Sigmoid colon (tissue), 7 donors: ENCODE measurements at regions of chr9 and their contacts with region 1.

Region 1: DNA sequence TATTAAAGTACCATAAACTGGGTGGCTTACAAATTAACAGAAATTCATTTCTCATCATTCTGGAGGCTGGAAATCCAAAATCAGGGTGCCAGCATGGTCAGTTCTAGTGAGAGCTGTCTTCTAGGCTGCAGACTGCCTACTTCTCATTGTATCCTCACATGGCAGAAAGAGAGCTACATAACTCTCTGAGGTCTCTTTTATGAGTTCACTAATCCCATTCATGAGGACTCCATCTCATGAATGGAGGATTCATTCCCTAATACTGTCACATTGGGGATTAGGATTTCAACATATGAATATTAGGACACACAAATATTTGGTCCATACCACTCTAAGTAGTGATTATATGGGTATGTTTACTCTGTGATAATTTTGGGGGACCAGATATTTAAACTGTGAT is 84.0 kb downstream of the ERP44 start:
- DNase-seq: no peak
- H3K4me3 ChIP-seq: no peak overlapping the region
- H3K27ac ChIP-seq: no peak overlapping the region
- H3K4me1 ChIP-seq: no peaks in the 10 kb centered on the region
- H3K27me3 ChIP-seq: no peaks in the 10 kb centered on the region
- CTCF ChIP-seq: no peak
- EP300 ChIP-seq: no peak
- POLR2A ChIP-seq: no peak

Region 2: GRCh38 chr9:99748266-99748665 is 266.6 kb before region 1 on chr9:
- intact Hi-C with region 1: no loop called
- DNase-seq: no peak
- H3K4me3 ChIP-seq: no peak overlapping the region
- H3K27ac ChIP-seq: no peak overlapping the region
- H3K4me1 ChIP-seq: no peaks in the 10 kb centered on the region
- H3K27me3 ChIP-seq: no peaks in the 10 kb centered on the region
- CTCF ChIP-seq: no peak
- EP300 ChIP-seq: no peak
- POLR2A ChIP-seq: no peak

Region 3: DNA sequence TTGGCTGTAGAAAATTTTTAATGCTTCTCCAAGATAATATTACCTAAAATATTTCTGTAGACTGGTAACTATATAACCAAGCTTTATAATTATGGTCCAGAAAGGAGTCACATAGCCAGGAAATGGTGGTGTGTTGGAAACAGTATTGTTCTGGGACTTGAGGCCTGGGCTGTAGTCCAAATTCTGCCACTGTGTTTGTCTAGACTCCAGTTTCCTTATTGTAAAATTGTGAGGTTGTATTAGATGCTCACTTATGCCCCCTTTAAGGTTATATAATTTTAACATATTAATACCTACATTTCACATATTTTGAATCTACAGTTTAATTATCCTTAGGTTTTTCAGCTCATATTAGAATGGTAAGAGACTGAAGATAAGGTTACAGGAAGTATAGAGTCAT is 66.0 kb before region 1 on chr9:
- intact Hi-C with region 1: loop called (anchors 5 kb)
- DNase-seq: no peak
- H3K4me3 ChIP-seq: no peak overlapping the region
- H3K27ac ChIP-seq: no peak overlapping the region
- H3K4me1 ChIP-seq: no peaks in the 10 kb centered on the region
- H3K27me3 ChIP-seq: no peaks in the 10 kb centered on the region
- CTCF ChIP-seq: no peak
- EP300 ChIP-seq: no peak
- POLR2A ChIP-seq: no peak

Region 4: DNA sequence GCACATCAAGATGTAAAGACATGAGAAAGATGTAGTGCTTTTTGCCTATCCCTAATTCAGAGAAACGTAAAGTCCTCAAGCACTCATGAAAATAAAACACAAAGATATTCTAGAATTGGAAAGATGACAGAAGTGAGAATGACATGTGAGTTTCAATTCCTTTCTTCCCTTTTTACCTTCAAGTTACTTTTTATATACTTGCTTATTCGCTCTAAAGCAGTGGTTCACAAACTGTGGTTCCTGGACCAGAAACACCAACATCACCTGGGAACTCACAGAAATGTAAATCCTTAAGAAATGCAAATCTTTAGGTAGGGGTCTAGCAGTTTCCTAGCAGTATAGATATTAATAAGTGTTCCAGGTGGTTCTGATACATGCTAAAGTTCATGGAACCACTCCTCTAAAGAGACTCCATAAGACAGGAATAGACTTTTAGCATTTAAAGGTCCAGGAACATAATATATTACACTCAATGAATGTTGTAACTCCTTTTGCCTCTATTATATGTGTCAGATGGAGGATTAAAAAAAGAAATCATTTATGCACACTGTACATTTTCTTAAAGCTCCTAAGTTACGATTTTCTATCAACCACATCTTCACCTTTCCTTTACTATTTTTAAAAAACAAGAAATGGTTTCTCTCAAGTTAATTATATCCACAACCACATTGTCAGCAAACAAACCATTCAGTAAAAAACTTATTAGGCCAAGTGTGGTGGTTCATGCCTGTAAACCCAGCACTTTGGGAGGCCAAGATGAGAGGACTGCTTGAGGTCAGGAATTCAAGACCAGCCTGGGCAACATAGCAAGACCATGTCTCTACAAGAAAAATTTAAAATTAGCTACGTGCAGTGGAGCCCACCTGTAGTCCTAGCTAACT is 44.1 kb after region 1 on chr9:
- intact Hi-C with region 1: no loop called
- DNase-seq: no peak
- H3K4me3 ChIP-seq: no peak overlapping the region
- H3K27ac ChIP-seq: no peak overlapping the region
- H3K4me1 ChIP-seq: peaks cover 0 to 10% (median 2%) of the 10 kb centered on the region in 4 donors
- H3K27me3 ChIP-seq: no peaks in the 10 kb centered on the region
- CTCF ChIP-seq: no peak
- EP300 ChIP-seq: no peak
- POLR2A ChIP-seq: no peak

Region 5: DNA sequence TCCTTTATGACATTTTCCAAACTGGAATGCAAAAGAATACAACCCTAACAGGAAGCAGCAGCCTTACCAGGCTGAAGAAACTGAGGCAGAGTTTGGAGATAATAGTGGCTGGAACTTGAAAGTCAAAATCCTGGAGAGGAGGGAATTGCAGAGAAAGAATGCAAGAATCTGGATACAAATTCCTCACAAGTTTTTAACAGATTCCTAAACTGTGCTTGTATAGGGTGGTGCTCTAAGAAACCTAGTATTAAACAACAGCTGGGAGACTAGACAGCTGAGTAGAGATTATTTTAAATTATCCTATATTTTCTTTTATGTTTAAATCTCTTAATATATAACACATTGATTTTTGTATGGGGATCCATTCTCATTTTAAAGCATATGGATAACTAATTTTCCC is 114.9 kb after region 1 on chr9:
- intact Hi-C with region 1: no loop called
- DNase-seq: no peak
- H3K4me3 ChIP-seq: no peak overlapping the region
- H3K27ac ChIP-seq: no peak overlapping the region
- H3K4me1 ChIP-seq: no peaks in the 10 kb centered on the region
- H3K27me3 ChIP-seq: no peaks in the 10 kb centered on the region
- CTCF ChIP-seq: no peak
- EP300 ChIP-seq: no peak
- POLR2A ChIP-seq: no peak